Naive thymus-derived CD4-positive, alpha-beta T cell (primary cell): ENCODE measurements at regions of chr1 and their contacts with region 1.

Region 1: GRCh38 chr1:150106341-150106740 is 38.8 kb downstream of the VPS45 start:
- DNase-seq: peak in 7 of 9 donors; percentile 29 to 67 (median 56)
- ATAC-seq: peak; percentile 85
- H3K4me3 ChIP-seq: no peak overlapping the region
- H3K4me3 Mint-ChIP-seq: peak overlapping the region; percentile 55 to 86 (median 75)
- H3K27ac ChIP-seq: peak overlapping the region; percentile 62
- H3K27ac Mint-ChIP-seq: peak overlapping the region; percentile 79 to 96 (median 94)
- H3K4me1 ChIP-seq: peaks cover 36 to 48% of the 10 kb centered on the region in 2 donors
- H3K4me1 Mint-ChIP-seq: peaks cover 44 to 91% (median 85%) of the 10 kb centered on the region in 7 donors
- H3K27me3 ChIP-seq: no peaks in the 10 kb centered on the region
- H3K27me3 Mint-ChIP-seq: no peaks in the 10 kb centered on the region

Region 2: GRCh38 chr1:150089846-150090520 is 16.4 kb before region 1 on chr1:
- CTCF ChIA-PET with region 1: interaction called, 3 read pairs
- POLR2A ChIA-PET with region 1: interaction called, 8 read pairs
- intact Hi-C with region 1: loop called in 1 of 2 experiments (anchors 1 kb)
- DNase-seq: no peak
- ATAC-seq: peak; percentile 42
- H3K4me3 ChIP-seq: no peak overlapping the region
- H3K4me3 Mint-ChIP-seq: no peak overlapping the region
- H3K27ac ChIP-seq: no peak overlapping the region
- H3K27ac Mint-ChIP-seq: no peak overlapping the region
- H3K4me1 ChIP-seq: peaks cover 6 to 11% of the 10 kb centered on the region in 2 donors
- H3K4me1 Mint-ChIP-seq: peaks cover 17 to 43% (median 32%) of the 10 kb centered on the region in 7 donors
- H3K27me3 ChIP-seq: no peaks in the 10 kb centered on the region
- H3K27me3 Mint-ChIP-seq: no peaks in the 10 kb centered on the region

Region 3: DNA sequence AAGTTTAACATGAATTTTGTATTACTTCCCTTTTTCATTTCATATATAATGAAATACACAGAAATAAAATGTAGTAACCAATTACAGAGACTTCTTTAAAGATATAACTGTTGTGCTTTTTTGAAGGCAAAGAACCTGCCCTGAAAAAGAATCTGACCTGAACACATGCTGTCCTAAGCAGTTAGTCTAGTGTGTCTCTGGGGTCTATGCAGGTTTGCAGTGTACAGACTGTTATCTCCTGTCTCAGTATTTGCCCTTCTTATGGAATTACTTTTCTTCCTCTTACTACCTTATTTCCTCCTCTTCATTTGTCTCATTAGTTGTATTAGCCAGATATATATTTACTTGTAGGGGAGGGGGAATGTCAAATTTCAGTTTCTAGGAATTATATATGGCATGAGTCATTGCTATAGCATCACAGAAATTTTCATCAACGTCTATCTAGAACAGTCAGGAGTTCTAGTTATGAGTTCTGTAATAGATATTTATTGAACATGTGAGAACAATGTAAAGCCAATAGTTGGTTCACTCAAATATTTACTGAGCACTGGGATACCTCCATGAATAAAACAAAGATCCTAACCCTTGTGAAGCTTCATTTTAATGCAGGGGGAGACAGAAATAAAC is 15.0 kb after region 1 on chr1:
- CTCF ChIA-PET with region 1: no interaction called
- POLR2A ChIA-PET with region 1: interaction called, 7 read pairs
- intact Hi-C with region 1: loop called in 1 of 2 experiments (anchors 2 kb)
- DNase-seq: no peak
- ATAC-seq: no peak
- H3K4me3 ChIP-seq: no peak overlapping the region
- H3K4me3 Mint-ChIP-seq: no peak overlapping the region
- H3K27ac ChIP-seq: no peak overlapping the region
- H3K27ac Mint-ChIP-seq: peak overlapping the region in 1 of 9 donors; percentile 17
- H3K4me1 ChIP-seq: peaks cover 0 to 5% of the 10 kb centered on the region in 2 donors
- H3K4me1 Mint-ChIP-seq: peaks cover 0 to 8% (median 3%) of the 10 kb centered on the region in 7 donors
- H3K27me3 ChIP-seq: no peaks in the 10 kb centered on the region
- H3K27me3 Mint-ChIP-seq: no peaks in the 10 kb centered on the region

Region 4: DNA sequence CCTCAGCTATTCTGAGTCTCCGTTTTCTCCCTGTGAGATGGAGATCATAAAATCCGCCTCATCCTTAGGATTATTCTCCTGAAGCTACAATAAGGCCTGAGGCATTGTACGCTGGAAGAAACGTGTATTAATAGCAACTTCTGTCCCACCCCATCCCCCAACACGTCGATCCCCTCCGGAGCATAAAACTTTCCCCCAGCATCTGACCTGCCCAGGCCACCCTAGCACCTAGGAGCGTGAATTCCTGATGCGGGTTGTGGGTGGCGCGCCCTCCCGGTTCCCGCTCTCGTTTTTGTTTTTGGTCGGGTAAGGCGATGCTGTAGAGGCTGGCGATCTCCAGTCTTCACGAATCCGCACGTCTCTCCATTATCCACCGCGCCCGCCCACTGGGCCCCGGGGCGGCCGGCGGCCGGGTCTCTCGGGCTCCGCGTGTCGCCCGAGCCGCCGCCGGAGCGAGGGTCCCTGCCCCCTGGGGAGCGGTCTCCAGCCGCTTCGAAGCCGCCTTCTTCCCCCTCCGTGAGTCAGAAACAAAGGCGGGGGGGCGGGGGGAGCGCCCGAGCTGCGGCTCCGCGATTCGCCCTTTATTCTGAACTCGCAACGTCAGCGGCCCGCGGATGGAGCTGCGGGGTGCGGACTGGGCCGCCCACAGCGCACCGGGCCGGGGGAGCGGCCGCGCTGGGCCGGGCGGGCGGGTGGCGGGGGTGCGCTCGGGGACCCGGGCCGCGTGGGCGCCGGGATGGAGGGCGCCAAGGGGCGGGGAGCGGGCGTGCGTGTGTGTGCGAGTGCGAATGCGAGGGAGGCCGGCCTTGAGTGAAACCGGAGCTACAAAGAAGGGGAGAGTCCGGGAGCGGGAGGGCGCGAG is 43.2 kb after region 1 on chr1 and contains the start of gene PLEKHO1:
- CTCF ChIA-PET with region 1: interaction called, 3 read pairs
- POLR2A ChIA-PET with region 1: interaction called, 82 read pairs
- intact Hi-C with region 1: loop called (anchors 1 kb)
- DNase-seq: peak; percentile 53 to 84 (median 65)
- ATAC-seq: peak; percentile 86
- H3K4me3 ChIP-seq: peak within 1 kb of the TSS; percentile 89
- H3K4me3 Mint-ChIP-seq: peak within 1 kb of the TSS; percentile 89 to 99 (median 96)
- H3K27ac ChIP-seq: peak within 1 kb of the TSS; percentile 77
- H3K27ac Mint-ChIP-seq: peak within 1 kb of the TSS; percentile 87 to 99 (median 97)
- H3K4me1 ChIP-seq: peaks cover 21 to 38% of the 10 kb centered on the region in 2 donors
- H3K4me1 Mint-ChIP-seq: peaks cover 42 to 79% (median 74%) of the 10 kb centered on the region in 7 donors
- H3K27me3 ChIP-seq: no peaks in the 10 kb centered on the region
- H3K27me3 Mint-ChIP-seq: peaks cover 0 to 26% (median 0%) of the 10 kb centered on the region in 5 donors
- total RNA-seq, gene PLEKHO1: 64.9 to 111 (median 94.1) TPM